Ovary (tissue), 10 donors: ENCODE measurements at regions of chr21 and their contacts with region 1.

Region 1: GRCh38 chr21:32070676-32071330 is 198.0 kb downstream of the HUNK start:
- DNase-seq: no peak
- H3K4me3 ChIP-seq: no peak overlapping the region
- H3K27ac ChIP-seq: no peak overlapping the region
- H3K4me1 ChIP-seq: no peaks in the 10 kb centered on the region
- H3K27me3 ChIP-seq: no peaks in the 10 kb centered on the region
- CTCF ChIP-seq: no peak
- EP300 ChIP-seq: no peak
- POLR2A ChIP-seq: no peak

Region 2: DNA sequence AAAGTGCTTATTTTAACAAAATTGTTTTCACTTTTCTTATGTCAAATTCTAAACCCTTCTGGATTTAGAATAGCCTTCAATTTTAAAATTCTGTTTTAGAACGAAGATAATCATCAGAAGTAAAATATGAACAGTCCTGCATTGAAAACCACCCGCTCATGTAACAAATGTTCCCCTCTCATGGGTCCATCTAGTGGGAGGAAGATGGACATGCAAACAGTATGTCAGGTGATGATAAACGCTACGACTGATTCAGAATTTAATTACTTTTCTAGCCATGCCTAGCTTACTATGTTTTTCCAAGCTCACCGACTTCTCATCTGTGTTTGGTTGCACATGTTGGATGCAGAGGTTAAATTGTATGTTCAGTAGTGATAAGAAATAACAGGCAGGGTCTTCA is 387.8 kb before region 1 on chr21:
- intact Hi-C with region 1: no loop called
- DNase-seq: no peak
- H3K4me3 ChIP-seq: no peak overlapping the region
- H3K27ac ChIP-seq: no peak overlapping the region
- H3K4me1 ChIP-seq: peaks cover 7% of the 10 kb centered on the region
- H3K27me3 ChIP-seq: no peaks in the 10 kb centered on the region
- CTCF ChIP-seq: no peak
- EP300 ChIP-seq: no peak
- POLR2A ChIP-seq: no peak

Region 3: DNA sequence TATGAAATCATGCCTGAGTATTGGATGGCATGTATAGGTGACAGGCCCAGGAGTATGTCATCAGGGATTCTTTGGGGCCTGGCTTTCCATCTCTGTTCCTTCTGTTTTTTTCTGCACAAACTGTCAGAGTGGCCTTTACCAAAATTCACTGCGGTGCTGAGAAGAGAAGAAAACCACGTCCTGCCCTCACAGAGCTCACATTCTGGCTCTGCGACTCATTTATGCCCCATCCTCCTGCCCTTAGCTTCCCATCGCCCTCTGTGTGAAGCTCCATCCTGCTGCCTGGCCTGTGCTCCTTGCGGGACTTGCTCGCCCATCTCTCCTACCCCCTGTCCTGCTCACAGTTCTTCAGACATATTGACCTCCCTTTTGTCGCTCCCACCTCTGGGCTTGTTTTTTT is 124.6 kb before region 1 on chr21:
- intact Hi-C with region 1: no loop called
- DNase-seq: no peak
- H3K4me3 ChIP-seq: no peak overlapping the region
- H3K27ac ChIP-seq: no peak overlapping the region
- H3K4me1 ChIP-seq: peaks cover 3% of the 10 kb centered on the region
- H3K27me3 ChIP-seq: no peaks in the 10 kb centered on the region
- CTCF ChIP-seq: no peak
- EP300 ChIP-seq: no peak
- POLR2A ChIP-seq: no peak

Region 4: DNA sequence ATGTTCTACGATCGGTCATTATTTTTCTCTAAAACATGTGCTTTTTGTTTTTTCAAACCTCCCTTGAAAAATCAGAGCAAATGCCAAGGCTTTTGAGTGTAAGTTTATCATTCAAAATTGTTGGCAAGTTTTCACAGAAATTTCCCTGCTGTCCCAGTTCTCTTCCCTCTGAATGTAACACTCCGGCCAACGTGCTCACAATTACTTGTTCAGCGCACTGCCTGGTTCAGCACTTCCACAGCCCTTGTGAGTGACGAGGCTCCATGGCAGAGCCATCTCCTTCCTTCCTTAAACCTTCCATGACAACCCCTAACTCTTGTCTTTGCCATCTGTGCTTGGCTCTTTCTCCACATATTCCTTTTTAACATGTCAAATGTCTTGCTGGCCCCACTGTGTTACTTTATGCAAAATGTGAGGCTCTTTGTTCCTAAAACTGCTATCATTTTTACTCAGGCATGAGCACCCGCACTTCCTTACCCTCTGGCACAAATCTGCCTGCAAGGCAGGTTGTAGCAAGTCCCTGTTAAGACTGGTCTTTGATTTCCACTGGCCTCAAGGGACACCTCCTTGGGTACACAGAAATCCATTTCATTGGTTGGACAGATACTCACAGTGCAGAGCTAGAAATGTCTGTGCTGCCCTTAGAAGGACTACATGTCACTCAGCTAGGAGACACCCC is 55.2 kb before region 1 on chr21:
- intact Hi-C with region 1: loop called in 1 of 4 experiments (anchors 10 kb)
- DNase-seq: peak in 1 of 5 donors; percentile 15
- H3K4me3 ChIP-seq: no peak overlapping the region
- H3K27ac ChIP-seq: no peak overlapping the region
- H3K4me1 ChIP-seq: peaks cover 6% of the 10 kb centered on the region
- H3K27me3 ChIP-seq: no peaks in the 10 kb centered on the region
- CTCF ChIP-seq: no peak
- EP300 ChIP-seq: no peak
- POLR2A ChIP-seq: no peak